AG04449 (cell line): ENCODE measurements at regions of chr13 and their contacts with region 1.

Region 1: GRCh38 chr13:108902557-108903155 is 273.2 kb downstream of the MYO16 start:
- DNase-seq: no peak
- H3K4me3 ChIP-seq: no peak overlapping the region
- CTCF ChIP-seq: no peak

Region 2: DNA sequence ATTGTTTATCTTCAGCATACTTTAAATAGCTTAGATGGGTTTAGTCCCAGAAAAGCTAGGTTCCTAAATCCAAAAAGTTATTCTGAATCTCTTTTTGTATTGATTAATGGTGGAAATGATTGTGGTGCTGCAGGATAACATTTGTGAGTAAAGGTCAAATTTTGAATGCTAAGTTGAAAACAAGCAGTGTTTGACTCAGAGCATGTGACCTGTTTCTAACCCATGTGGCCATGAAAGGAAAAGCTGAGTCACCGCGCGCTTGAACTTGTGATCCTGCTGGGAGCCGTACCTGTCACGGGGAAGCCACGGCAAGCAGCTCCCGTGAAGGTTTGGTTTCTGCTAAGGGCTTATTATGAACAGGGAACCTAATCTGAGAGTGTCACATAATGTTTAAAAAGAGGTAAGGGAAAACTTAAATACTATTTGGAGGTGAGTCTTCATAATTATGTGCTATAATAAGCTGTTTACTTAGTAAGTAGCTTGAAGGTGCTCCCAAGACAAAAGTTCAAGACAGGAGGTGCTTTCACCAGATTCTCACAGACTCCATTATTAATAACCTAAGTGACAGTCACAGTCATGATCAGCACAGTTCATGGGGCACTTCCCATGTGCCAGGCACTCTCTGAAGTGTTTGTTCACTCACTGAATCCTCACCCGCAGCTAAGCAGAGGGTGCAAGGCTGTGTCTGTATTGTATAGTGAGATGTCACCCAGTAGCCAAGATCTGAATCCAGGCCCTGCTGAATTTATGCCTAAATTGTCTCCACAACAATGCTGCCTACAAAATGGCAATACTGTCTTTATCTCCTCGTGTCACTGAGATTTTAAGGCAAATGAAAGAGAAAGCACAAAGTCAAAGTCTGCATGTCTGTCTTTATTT is 13.2 kb after region 1 on chr13:
- CTCF ChIA-PET with region 1: interaction called, 14 read pairs
- POLR2A ChIA-PET with region 1: no interaction called
- DNase-seq: no peak
- H3K4me3 ChIP-seq: no peak overlapping the region
- CTCF ChIP-seq: no peak

Region 3: DNA sequence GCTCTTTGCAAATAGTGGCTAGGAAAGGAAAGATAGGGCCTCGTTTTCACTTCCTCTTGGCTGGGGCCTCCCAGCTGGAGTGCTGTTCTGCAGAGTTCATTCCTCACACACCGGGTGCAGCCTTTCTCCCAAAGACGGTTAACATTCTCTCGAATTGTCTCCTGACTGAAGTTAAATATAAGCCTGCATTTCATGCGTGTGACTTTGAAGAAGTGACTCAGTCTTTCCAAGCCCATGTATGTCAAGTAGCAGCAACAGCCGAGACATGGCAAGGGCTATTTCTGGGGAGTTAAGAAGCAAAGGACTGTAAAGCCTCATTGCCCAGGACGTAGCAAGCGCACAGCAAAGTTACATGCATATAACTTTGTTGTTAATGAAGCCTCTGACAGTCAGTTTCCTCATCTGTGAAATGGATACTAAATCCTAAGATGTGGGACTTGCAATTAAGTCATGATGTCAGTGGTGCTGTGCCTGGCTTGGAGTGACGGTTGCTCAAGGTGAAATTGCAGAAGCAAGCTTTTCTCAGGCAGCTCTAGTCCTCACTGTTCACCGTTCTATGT is 229.1 kb after region 1 on chr13:
- CTCF ChIA-PET with region 1: no interaction called
- POLR2A ChIA-PET with region 1: no interaction called
- DNase-seq: no peak
- H3K4me3 ChIP-seq: no peak overlapping the region
- CTCF ChIP-seq: no peak